Esophagus muscularis mucosa (tissue), 4 donors: ENCODE measurements at regions of chr2 and their contacts with region 1.

Region 1: GRCh38 chr2:38685116-38685735 is 19.3 kb downstream of the GALM start:
- DNase-seq: no peak
- H3K4me3 ChIP-seq: no peak overlapping the region
- H3K27ac ChIP-seq: no peak overlapping the region
- H3K4me1 ChIP-seq: peaks cover 0 to 6% (median 2%) of the 10 kb centered on the region in 4 donors
- H3K27me3 ChIP-seq: no peaks in the 10 kb centered on the region
- CTCF ChIP-seq: no peak
- EP300 ChIP-seq: no peak
- POLR2A ChIP-seq: no peak

Region 2: DNA sequence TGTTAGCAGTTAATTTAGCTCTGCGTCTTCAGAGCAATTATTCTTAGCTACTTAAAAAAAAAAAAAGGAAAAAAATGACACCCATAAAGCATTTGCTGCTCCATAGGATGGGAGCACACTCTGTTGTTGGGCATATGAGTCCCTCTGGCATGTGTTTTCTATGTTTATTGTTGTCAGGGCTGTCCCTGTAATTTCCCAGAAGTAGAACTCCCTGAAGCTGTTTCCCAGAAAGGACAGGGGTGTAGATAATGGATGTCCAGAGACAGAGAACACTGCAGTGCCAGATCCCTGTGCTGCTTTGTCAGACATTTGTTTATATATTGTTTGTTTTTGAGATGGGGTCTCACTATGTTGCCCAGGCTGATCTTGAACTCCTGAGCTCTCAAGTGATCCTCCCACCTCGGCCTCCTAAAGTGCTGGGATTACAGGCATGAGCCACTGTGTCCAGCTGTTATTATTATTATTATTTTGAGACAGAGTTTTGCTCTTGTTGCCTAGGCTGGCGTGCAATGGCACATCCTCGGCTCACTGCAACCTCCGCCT is 13.3 kb after region 1 on chr2:
- intact Hi-C with region 1: loop called (anchors 2 kb)
- DNase-seq: no peak
- H3K4me3 ChIP-seq: no peak overlapping the region
- H3K27ac ChIP-seq: no peak overlapping the region
- H3K4me1 ChIP-seq: peaks cover 0 to 3% (median 2%) of the 10 kb centered on the region in 4 donors
- H3K27me3 ChIP-seq: no peaks in the 10 kb centered on the region
- CTCF ChIP-seq: no peak
- EP300 ChIP-seq: no peak
- POLR2A ChIP-seq: no peak

Region 3: GRCh38 chr2:38806015-38806732 is 120.9 kb after region 1 on chr2:
- intact Hi-C with region 1: no loop called
- DNase-seq: no peak
- H3K4me3 ChIP-seq: no peak overlapping the region
- H3K27ac ChIP-seq: no peak overlapping the region
- H3K4me1 ChIP-seq: no peaks in the 10 kb centered on the region
- H3K27me3 ChIP-seq: no peaks in the 10 kb centered on the region
- CTCF ChIP-seq: no peak
- EP300 ChIP-seq: no peak
- POLR2A ChIP-seq: no peak